T-cell (primary cell): ENCODE measurements at regions of chr6 and their contacts with region 1.

Region 1: GRCh38 chr6:56856036-56856580 is 98.8 kb upstream of the BEND6 start:
- DNase-seq: no peak
- ATAC-seq: no peak
- H3K4me3 ChIP-seq: no peak overlapping the region
- H3K4me3 Mint-ChIP-seq: no peak overlapping the region
- H3K27ac ChIP-seq: no peak overlapping the region
- H3K27ac Mint-ChIP-seq: no peak overlapping the region
- H3K4me1 ChIP-seq: peaks cover 0 to 10% of the 10 kb centered on the region in 2 experiments
- H3K4me1 Mint-ChIP-seq: peaks cover 15 to 16% (median 15%) of the 10 kb centered on the region in 3 donors
- H3K27me3 ChIP-seq: peaks cover 0 to 10% of the 10 kb centered on the region in 2 experiments
- H3K27me3 Mint-ChIP-seq: peaks cover 19 to 21% of the 10 kb centered on the region in 2 donors

Region 2: DNA sequence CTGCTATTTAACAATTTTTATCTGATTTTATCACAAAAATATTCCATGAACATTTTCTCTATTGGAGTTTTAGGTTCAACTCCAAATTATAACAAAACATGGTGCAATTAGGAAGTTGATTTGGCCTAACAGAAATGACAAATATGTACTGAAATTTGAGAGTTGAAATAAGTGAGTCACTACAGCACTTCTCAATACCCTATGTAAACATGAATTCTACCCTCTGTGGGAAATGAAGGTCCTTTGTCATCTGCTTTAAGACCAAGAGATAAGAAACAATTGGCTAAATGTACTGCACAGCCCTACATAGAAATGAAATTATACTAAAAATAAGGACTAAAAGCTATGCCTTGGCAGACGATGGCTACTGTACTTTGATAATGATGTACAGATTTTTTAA is 12.6 kb after region 1 on chr6:
- CTCF ChIA-PET with region 1: interaction called in 1 of 2 experiments, 6 read pairs
- POLR2A ChIA-PET with region 1: interaction called in 1 of 2 experiments, 12 read pairs
- DNase-seq: no peak
- ATAC-seq: no peak
- H3K4me3 ChIP-seq: no peak overlapping the region
- H3K4me3 Mint-ChIP-seq: no peak overlapping the region
- H3K27ac ChIP-seq: no peak overlapping the region
- H3K27ac Mint-ChIP-seq: no peak overlapping the region
- H3K4me1 ChIP-seq: no peaks in the 10 kb centered on the region
- H3K4me1 Mint-ChIP-seq: no peaks in the 10 kb centered on the region
- H3K27me3 ChIP-seq: peaks cover 0 to 9% of the 10 kb centered on the region in 2 experiments
- H3K27me3 Mint-ChIP-seq: peaks cover 3 to 9% of the 10 kb centered on the region in 2 donors

Region 3: DNA sequence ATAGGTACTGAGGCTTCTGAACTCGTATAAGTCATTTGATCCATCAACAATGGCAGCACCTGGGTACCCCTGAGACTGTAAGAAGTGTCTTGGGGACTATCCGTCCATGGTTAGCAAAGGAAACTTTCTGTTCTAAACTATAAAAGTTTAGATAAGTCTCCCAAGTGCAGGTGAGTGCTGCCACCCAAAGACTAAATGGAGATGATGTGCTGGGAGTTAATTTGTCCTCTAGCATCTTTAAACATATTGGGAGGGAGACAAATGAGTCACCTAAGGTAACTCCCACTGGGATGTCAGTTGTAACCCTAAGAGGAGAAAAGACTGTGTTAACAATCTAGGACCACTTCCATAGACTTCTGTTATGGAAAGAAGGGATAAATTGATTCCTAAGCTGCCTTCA is 105.0 kb after region 1 on chr6:
- CTCF ChIA-PET with region 1: no interaction called
- POLR2A ChIA-PET with region 1: no interaction called
- DNase-seq: no peak
- ATAC-seq: no peak
- H3K4me3 ChIP-seq: no peak overlapping the region
- H3K4me3 Mint-ChIP-seq: no peak overlapping the region
- H3K27ac ChIP-seq: no peak overlapping the region
- H3K27ac Mint-ChIP-seq: no peak overlapping the region
- H3K4me1 ChIP-seq: no peaks in the 10 kb centered on the region
- H3K4me1 Mint-ChIP-seq: no peaks in the 10 kb centered on the region
- H3K27me3 ChIP-seq: no peaks in the 10 kb centered on the region
- H3K27me3 Mint-ChIP-seq: peaks cover 31 to 42% of the 10 kb centered on the region in 2 donors